ENCODE measurements at regions of chr3 and their contacts with region 1.

Region 1: DNA sequence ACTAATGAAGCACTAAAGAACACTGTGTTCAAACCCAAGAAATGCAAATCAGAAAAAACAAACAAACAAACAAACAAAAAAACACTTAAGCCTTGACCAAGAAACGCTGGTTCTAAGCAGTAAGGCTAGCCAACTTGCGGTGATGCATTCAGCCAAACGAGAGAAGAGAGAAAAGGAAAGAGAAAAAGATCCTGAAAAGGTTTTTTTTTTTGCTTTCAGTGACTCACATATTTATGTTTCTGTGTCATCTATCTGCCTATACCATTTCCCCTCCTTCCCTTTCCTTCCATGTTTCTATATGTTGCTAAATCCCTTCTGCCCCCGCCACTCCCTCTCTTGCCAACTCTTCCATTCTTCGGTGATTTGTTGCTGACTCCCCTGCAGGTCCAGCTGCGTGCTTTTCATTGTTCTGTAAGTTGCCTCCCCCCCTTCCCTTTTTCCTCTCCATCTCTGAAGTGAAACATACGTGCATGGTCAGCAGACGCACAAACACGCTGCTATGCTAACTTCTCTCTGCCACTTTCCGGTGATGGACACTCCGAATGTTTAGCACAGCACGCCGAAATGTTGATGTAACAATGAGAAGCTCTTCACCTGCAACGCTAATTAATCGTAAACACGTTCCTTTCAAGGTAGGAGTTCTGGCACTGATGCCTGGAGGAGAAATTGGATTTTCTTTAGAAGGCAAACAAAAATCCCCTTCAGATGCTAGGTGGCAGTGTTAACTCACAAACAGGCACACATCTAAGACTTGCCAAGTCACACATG is 154.4 kb downstream of the TUSC7 start:
- DNase-seq: no peak
- H3K4me3 ChIP-seq: peak overlapping the region in 6 of 8 donors; percentile 3 to 57 (median 11)
- H3K27ac ChIP-seq: no peak overlapping the region
- H3K4me1 ChIP-seq: peaks cover 0 to 14% (median 2%) of the 10 kb centered on the region in 6 donors
- H3K27me3 ChIP-seq: peaks cover 0 to 6% (median 0%) of the 10 kb centered on the region in 7 donors
- CTCF ChIP-seq: peak in 10 of 11 experiments; percentile 15 to 57 (median 40)
- POLR2A ChIP-seq: no peak

Region 2: DNA sequence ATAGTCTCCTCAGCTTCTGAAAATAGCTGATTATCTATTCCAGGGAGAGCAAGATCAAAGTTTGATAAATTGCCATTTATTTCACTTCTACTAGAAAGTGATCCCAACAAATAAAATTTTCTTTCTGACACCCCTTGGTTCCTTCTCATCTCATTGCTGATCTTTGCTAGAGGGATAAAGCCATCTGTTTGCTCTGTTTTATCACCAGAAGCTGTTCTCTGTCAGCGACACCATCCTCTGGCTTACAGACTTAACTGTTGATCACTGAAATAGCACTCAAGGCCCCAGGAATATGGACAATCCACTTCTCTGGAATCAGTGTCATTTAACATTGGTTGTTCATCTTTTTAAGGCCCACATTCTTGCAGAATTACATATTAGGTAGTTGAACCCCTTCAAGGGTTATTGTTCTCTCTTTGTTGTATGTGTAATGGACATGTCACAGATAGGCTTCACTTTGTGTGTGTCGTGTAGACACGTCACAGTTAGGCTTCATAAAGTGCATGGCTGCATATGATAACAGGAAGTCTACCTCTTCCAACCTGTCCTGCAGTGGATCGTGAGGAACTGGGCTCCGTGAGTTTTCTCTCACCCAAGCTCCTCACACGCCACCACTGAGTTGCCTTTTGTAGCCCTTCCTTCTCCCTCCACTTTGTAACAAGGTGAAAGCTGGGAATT is 637.6 kb before region 1 on chr3:
- intact Hi-C with region 1: no loop called
- DNase-seq: no peak
- H3K4me3 ChIP-seq: no peak overlapping the region
- H3K27ac ChIP-seq: no peak overlapping the region
- H3K4me1 ChIP-seq: no peaks in the 10 kb centered on the region
- H3K27me3 ChIP-seq: no peaks in the 10 kb centered on the region
- CTCF ChIP-seq: no peak
- POLR2A ChIP-seq: no peak

Region 3: DNA sequence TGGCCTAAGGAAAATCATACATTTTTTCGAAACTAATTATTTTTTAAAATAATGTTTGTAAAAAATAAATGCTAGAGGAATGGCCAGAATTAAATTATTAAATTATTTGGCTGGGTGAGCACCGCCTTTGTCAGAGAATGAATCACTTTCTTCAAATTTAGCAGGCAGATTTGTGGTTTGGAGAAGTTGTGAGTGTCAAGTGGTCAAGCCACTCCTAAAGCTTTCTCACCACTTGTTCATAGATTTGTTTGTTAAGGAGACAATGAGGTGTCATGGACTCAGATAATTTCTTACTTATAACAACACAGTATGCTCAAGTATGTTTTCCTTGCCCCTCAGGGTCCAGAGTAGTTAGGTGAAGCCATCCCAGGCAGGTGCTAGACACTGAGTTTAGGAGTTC is 41.8 kb after region 1 on chr3:
- intact Hi-C with region 1: no loop called
- DNase-seq: no peak
- H3K4me3 ChIP-seq: no peak overlapping the region
- H3K27ac ChIP-seq: no peak overlapping the region
- H3K4me1 ChIP-seq: no peaks in the 10 kb centered on the region
- H3K27me3 ChIP-seq: no peaks in the 10 kb centered on the region
- CTCF ChIP-seq: no peak
- POLR2A ChIP-seq: no peak

Region 4: GRCh38 chr3:116920826-116921610 is 57.0 kb after region 1 on chr3:
- intact Hi-C with region 1: no loop called
- DNase-seq: no peak
- H3K4me3 ChIP-seq: no peak overlapping the region
- H3K27ac ChIP-seq: no peak overlapping the region
- H3K4me1 ChIP-seq: no peaks in the 10 kb centered on the region
- H3K27me3 ChIP-seq: no peaks in the 10 kb centered on the region
- CTCF ChIP-seq: no peak
- POLR2A ChIP-seq: no peak

Region 5: GRCh38 chr3:117510396-117510795 is 646.4 kb after region 1 on chr3:
- intact Hi-C with region 1: loop called (anchors 10 kb)
- DNase-seq: no peak
- H3K4me3 ChIP-seq: no peak overlapping the region
- H3K27ac ChIP-seq: no peak overlapping the region
- H3K4me1 ChIP-seq: no peaks in the 10 kb centered on the region
- H3K27me3 ChIP-seq: no peaks in the 10 kb centered on the region
- CTCF ChIP-seq: no peak
- POLR2A ChIP-seq: no peak